SK-N-SH (cell line): ENCODE measurements at regions of chr12 and their contacts with region 1.

Region 1: GRCh38 chr12:113322343-113322742 is 12.6 kb downstream of the SLC8B1 start:
- DNase-seq: no peak
- H3K4me3 ChIP-seq: no peak overlapping the region
- H3K27ac ChIP-seq: no peak overlapping the region
- H3K4me1 ChIP-seq: no peaks in the 10 kb centered on the region
- H3K27me3 ChIP-seq: no peaks in the 10 kb centered on the region
- CTCF ChIP-seq: no peak
- EP300 ChIP-seq: no peak
- RAD21 ChIP-seq: no peak

Region 2: DNA sequence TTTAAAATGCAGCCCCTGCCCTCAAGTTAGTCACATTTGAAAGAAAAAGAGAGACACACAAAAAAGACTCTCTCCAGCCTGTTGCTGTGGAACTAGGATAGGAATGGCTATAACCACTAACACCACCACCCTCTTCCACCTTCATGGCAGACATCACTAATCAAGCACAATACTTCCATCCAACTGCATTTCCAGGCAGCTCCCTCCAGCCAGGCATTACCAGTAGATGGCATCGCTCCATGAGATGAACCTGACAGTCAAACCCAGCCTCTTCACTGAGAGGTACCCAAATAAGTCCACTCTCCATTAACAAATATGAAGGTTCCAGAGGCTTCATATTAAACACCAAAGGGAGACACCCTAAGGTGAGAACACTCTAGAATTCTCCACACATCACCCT is 11.9 kb before region 1 on chr12:
- CTCF ChIA-PET with region 1: interaction called, 12 read pairs
- POLR2A ChIA-PET with region 1: no interaction called
- DNase-seq: no peak
- H3K4me3 ChIP-seq: no peak overlapping the region
- H3K27ac ChIP-seq: no peak overlapping the region
- H3K4me1 ChIP-seq: no peaks in the 10 kb centered on the region
- H3K27me3 ChIP-seq: no peaks in the 10 kb centered on the region
- CTCF ChIP-seq: peak; percentile 29; the same call in 1 of the 2 replicates
- EP300 ChIP-seq: no peak
- RAD21 ChIP-seq: peak; percentile 4; the same call in 1 of the 2 replicates

Region 3: DNA sequence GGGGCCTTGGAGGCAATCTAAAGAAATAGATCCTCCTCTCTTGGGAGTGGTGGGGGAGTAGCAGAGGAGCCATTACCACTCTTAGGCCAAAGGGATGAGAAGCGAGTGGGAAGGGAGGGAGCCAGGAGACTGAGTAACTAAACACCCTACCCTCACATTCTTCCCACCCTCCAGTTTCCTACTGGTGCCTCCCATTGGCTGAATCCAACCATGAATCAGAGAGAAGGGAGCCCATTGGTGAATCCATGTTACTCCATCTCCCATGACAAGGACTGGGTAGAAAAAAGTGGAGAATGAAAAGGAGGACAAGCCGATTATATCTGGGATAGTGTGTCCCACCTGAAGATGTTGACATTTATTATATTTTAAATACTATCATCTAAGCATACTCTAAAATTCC is 226.1 kb after region 1 on chr12:
- CTCF ChIA-PET with region 1: no interaction called
- POLR2A ChIA-PET with region 1: no interaction called
- DNase-seq: no peak
- H3K4me3 ChIP-seq: no peak overlapping the region
- H3K27ac ChIP-seq: no peak overlapping the region
- H3K4me1 ChIP-seq: no peaks in the 10 kb centered on the region
- H3K27me3 ChIP-seq: no peaks in the 10 kb centered on the region
- CTCF ChIP-seq: no peak
- EP300 ChIP-seq: no peak
- RAD21 ChIP-seq: no peak